Dorsolateral prefrontal cortex (tissue), 120 donors: ENCODE measurements at regions of chr7 and their contacts with region 1.

Region 1: DNA sequence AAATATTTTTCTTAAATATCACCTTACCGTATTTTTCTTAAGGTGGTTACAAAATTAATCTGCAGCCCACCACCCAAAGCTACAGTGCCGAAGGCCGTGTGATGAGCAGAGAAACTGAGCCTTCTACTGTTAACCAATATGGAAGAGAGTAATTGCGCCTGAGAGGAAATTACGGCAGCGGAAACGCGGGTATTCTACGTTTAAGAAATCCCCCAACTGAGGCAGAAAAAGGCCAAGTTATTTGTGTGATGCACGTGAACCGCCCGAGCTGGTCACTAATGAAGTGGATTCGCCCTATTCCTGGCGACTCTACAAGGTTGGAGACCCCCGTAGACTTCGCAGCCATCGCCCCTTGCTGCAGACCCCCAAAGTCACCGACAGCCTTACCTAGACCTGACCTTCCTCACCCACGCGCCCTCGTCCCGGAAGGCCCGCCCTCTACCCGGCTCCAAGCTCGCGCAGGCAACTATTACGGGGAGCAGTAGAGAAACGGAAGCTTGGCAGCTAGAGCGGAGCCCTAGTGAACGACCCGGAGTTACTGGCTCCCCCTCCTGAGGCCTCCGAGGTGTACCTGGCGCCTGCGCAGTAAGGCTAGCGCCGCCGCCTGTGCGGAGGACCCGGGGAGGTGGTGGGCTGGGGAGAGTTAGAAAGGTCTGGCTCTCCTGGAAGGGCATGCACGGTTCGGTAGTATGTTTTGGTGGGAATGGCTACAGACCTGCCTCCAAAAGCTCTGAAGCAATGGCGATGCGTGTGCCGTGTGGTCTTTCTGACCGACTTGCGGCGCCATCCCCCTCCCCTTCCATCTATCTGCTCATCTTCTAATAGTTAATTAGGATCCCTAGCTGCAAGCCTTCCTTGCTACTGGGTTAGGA is at the start of gene MRPS33:
- DNase-seq: peak; percentile 88 to 98 (median 97)
- H3K4me3 ChIP-seq: peak within 1 kb of the TSS; percentile 55 to 95 (median 78)
- H3K27ac ChIP-seq: peak within 1 kb of the TSS; percentile 57 to 97 (median 91)
- H3K27me3 ChIP-seq: no peaks in the 10 kb centered on the region
- CTCF ChIP-seq: peak; percentile 62 to 90 (median 80)
- total RNA-seq, gene MRPS33: 18.7 to 61.6 (median 43.0) TPM

Region 2: DNA sequence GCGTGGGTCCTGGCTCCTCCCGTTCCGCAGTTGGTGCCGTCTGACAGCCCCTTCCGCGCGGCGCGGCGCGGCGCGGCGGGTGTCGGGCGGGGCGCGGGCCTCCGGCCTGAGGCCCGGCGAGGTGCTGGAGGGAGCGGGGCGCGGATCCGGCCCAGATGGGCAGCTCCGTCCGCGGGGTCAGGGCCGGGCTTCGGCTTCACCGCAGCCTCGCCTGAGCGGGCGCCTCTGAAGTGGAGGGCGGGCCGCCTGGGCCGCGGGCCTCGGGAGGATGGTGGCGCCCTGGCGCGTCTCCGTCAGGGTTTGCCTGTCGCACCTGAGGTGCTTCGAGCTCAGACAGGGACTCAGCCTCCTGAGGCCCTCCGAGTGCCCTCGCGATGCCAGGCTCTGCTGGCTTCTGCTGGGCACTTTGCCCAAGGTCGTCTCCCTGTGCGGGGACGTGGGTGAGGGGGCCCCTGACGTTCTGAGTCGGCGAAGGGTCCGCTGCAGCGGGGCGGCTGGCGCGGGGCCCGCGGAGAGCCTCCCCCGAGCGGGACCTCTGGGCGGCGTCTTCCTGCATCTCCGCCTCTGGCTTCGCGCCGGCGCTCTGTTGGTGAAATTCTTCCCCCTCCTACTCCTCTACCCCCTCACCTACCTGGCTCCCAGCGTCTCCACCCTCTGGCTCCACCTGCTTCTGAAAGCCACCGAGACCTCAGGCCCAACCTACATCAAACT is 341.5 kb before region 1 on chr7:
- intact Hi-C with region 1: loop called (anchors 5 kb)
- DNase-seq: peak in 5 of 10 donors; percentile 26 to 74 (median 45)
- H3K4me3 ChIP-seq: peak overlapping the region; percentile 58 to 98 (median 83)
- H3K27ac ChIP-seq: peak overlapping the region; percentile 46 to 97 (median 90)
- H3K27me3 ChIP-seq: no peaks in the 10 kb centered on the region
- CTCF ChIP-seq: peak in 5 of 56 donors; percentile 6 to 25 (median 7)

Region 3: GRCh38 chr7:140810830-140811556 is 203.8 kb before region 1 on chr7:
- intact Hi-C with region 1: loop called (anchors 5 kb)
- DNase-seq: peak in 4 of 10 donors; percentile 47 to 69 (median 58)
- H3K4me3 ChIP-seq: no peak overlapping the region
- H3K27ac ChIP-seq: no peak overlapping the region
- H3K27me3 ChIP-seq: no peaks in the 10 kb centered on the region
- CTCF ChIP-seq: peak; percentile 54 to 87 (median 80)

Region 4: GRCh38 chr7:141533149-141533949 is 518.6 kb after region 1 on chr7:
- intact Hi-C with region 1: loop called in 1 of 2 experiments (anchors 5 kb)
- DNase-seq: peak; percentile 49 to 80 (median 66)
- H3K4me3 ChIP-seq: peak overlapping the region in 15 of 59 donors; percentile 1 to 48 (median 21)
- H3K27ac ChIP-seq: peak overlapping the region in 26 of 59 donors; percentile 16 to 76 (median 50)
- H3K27me3 ChIP-seq: no peaks in the 10 kb centered on the region
- CTCF ChIP-seq: peak; percentile 85 to 99 (median 97)

Region 5: GRCh38 chr7:141654551-141654950 is 639.8 kb after region 1 on chr7:
- intact Hi-C with region 1: loop called in 1 of 2 experiments (anchors 5 kb)
- DNase-seq: peak; percentile 34 to 85 (median 69)
- H3K4me3 ChIP-seq: peak overlapping the region in 1 of 59 donors; percentile 1
- H3K27ac ChIP-seq: peak overlapping the region in 44 of 59 donors; percentile 3 to 75 (median 44)
- H3K27me3 ChIP-seq: no peaks in the 10 kb centered on the region
- CTCF ChIP-seq: peak; percentile 47 to 92 (median 84)